PC-3 (cell line): ENCODE measurements at regions of chr2 and their contacts with region 1.

Region 1: DNA sequence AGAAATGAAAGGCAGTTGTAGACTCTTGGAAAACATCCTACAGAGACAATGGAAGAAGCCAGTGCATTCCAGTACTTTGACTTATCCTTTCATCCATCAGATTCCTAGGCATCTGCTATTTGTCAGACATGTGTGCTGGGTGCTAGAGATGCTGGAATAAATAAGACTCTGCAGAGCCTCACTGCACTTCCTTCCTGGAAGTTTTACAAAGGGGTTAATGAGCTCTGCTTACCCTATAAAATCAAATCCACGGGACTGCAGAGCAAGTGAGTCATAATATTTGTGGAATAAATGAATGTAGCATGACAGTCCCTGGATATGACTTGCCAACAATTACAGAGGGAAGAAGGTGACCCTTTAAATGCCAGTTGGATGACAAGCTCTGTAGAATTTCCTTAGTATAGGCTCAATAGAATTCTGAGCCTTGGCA is 52.7 kb upstream of the NPAS2 start:
- DNase-seq: peak; percentile 97
- ATAC-seq: peak; percentile 79
- H3K4me3 ChIP-seq: peak overlapping the region; percentile 47
- H3K27ac ChIP-seq: peak overlapping the region; percentile 96
- H3K4me1 ChIP-seq: peaks cover 52% of the 10 kb centered on the region
- H3K27me3 ChIP-seq: no peaks in the 10 kb centered on the region
- CTCF ChIP-seq: no peak

Region 2: GRCh38 chr2:100554798-100555407 is 212.3 kb before region 1 on chr2:
- CTCF ChIA-PET with region 1: no interaction called
- POLR2A ChIA-PET with region 1: no interaction called
- intact Hi-C with region 1: no loop called
- DNase-seq: no peak
- ATAC-seq: no peak
- H3K4me3 ChIP-seq: no peak overlapping the region
- H3K27ac ChIP-seq: no peak overlapping the region
- H3K4me1 ChIP-seq: no peaks in the 10 kb centered on the region
- H3K27me3 ChIP-seq: no peaks in the 10 kb centered on the region
- CTCF ChIP-seq: no peak

Region 3: DNA sequence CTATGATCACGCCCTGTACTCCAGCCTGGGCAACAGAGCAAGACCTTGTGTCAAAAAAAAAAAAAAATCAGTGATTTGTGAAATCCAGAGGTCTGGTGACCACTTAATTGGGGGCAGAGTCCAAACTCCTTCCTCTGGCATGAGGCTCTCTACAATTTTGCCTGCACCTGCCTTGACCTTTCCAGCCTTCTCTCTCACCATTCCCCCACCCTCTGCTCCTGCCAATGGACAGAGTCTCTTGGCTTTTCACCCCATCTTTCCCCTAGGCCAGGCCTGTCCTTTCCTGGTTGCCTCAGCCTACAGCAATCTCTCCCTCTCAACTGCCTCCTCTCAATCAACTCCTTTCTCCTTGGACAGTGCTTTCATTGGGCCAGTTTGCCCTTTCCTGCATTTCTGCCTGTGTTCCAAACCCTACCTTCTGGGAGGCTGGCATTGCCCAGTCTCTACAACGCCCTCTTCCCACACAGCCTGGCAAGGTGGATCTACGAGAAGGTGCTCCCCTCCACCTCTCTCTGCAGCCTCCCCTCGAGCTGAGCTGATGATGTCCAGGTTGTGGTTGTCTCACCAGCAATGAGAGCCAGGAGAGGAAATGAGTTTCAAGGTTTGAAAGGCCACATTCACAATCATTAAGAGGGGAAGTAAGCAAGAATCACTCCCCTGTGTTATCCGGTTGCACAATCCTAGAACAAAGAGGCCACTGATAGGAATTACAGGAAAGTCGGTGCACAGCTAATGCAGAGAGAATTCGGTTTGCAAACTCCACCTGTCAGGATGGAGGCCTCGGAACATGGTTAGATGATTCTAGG is 13.2 kb after region 1 on chr2:
- CTCF ChIA-PET with region 1: interaction called, 5 read pairs
- POLR2A ChIA-PET with region 1: interaction called, 8 read pairs
- intact Hi-C with region 1: loop called (anchors 2 kb)
- DNase-seq: peak; percentile 96
- ATAC-seq: peak; percentile 84
- H3K4me3 ChIP-seq: no peak overlapping the region; the same call in 1 of the 2 replicates
- H3K27ac ChIP-seq: peak overlapping the region; percentile 99
- H3K4me1 ChIP-seq: peaks cover 48% of the 10 kb centered on the region
- H3K27me3 ChIP-seq: no peaks in the 10 kb centered on the region
- CTCF ChIP-seq: no peak

Region 4: DNA sequence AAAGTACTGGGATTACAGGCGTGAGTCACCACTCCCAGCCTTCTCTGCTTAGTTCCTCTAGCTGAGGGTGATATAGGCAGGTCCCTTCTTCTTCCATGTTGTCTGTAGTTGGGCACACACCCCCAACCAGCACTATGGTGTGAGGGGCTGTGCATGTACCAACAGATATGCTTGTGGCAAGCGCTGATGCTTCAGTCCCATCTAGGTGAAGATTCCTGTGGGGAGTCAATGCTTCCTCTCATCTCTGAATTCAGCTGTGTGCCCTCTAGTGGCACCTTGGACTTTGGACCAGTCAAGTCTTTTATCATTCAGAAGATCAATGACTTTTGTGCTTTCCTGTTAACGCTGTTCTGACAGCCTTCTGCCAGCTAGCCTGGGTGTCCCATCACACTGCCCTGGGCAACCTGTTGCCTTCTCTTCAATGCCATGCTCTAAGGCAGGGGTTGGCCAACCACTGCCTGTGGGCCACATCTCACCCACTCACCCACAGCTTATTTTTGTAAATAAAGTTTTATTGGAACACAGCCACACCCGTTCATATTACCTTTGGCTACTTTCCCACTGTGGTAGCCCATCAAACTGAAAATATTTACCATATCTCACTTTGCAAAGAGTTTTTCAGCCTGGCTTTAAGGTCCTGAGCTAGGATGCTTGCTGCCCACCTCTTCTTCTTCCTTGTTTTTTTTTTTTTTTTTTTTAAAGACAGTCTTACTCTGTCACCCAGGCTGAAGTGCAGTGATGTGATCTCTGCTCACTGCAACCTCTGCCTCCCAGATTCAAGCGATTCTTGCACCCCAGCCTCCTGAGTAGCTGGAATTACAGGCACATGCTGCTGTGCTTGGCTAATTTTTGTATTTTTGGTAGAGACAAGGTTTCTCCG is 103.7 kb after region 1 on chr2:
- CTCF ChIA-PET with region 1: no interaction called
- POLR2A ChIA-PET with region 1: no interaction called
- intact Hi-C with region 1: no loop called
- DNase-seq: peak; percentile 43
- ATAC-seq: no peak; the same call in 1 of the 2 replicates
- H3K4me3 ChIP-seq: no peak overlapping the region
- H3K27ac ChIP-seq: no peak overlapping the region
- H3K4me1 ChIP-seq: peaks cover 27% of the 10 kb centered on the region
- H3K27me3 ChIP-seq: no peaks in the 10 kb centered on the region
- CTCF ChIP-seq: peak; percentile 73

Region 5: DNA sequence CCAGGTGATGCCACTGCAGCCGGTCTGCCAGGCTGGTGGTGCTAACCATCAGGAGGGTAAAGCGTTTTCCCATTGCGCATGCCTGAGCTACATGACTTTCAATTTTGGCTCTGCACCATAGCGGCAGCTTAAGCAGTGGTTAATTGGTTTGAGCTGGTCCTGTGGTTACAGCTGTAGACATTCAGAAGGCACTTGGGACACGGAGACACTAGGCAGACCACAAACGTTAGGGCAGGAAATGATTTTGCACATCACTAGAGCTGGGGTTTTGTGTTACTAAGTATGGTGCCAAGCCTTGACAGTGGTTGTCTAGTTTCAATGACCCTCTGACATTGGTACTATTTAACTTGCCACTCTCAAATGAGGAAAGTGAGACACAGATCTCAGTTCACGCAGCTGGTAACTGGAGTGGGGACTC is 456.6 kb after region 1 on chr2:
- CTCF ChIA-PET with region 1: no interaction called
- POLR2A ChIA-PET with region 1: no interaction called
- intact Hi-C with region 1: no loop called
- DNase-seq: no peak
- ATAC-seq: no peak
- H3K4me3 ChIP-seq: no peak overlapping the region
- H3K27ac ChIP-seq: no peak overlapping the region
- H3K4me1 ChIP-seq: no peaks in the 10 kb centered on the region
- H3K27me3 ChIP-seq: no peaks in the 10 kb centered on the region
- CTCF ChIP-seq: no peak

Region 6: GRCh38 chr2:101380376-101380775 is 613.1 kb after region 1 on chr2:
- CTCF ChIA-PET with region 1: no interaction called
- POLR2A ChIA-PET with region 1: no interaction called
- intact Hi-C with region 1: no loop called
- DNase-seq: peak; percentile 17
- ATAC-seq: peak; percentile 56; the same call in 1 of the 2 replicates
- H3K4me3 ChIP-seq: no peak overlapping the region
- H3K27ac ChIP-seq: no peak overlapping the region
- H3K4me1 ChIP-seq: peaks cover 1% of the 10 kb centered on the region; the same call in 1 of the 2 replicates
- H3K27me3 ChIP-seq: no peaks in the 10 kb centered on the region
- CTCF ChIP-seq: no peak